Activated CD8-positive, alpha-beta T cell treated with anti-CD3 and anti-CD28 coated beads for 36 hours (primary cell): ENCODE measurements at regions of chr14 and their contacts with region 1.

Region 1: GRCh38 chr14:90288651-90289355 is 32.5 kb downstream of the PSMC1 start:
- DNase-seq: no peak
- ATAC-seq: no peak
- H3K4me3 Mint-ChIP-seq: no peak overlapping the region
- H3K27ac Mint-ChIP-seq: no peak overlapping the region
- H3K4me1 Mint-ChIP-seq: no peaks in the 10 kb centered on the region
- H3K27me3 Mint-ChIP-seq: no peaks in the 10 kb centered on the region
- CTCF ChIP-seq: no peak

Region 2: DNA sequence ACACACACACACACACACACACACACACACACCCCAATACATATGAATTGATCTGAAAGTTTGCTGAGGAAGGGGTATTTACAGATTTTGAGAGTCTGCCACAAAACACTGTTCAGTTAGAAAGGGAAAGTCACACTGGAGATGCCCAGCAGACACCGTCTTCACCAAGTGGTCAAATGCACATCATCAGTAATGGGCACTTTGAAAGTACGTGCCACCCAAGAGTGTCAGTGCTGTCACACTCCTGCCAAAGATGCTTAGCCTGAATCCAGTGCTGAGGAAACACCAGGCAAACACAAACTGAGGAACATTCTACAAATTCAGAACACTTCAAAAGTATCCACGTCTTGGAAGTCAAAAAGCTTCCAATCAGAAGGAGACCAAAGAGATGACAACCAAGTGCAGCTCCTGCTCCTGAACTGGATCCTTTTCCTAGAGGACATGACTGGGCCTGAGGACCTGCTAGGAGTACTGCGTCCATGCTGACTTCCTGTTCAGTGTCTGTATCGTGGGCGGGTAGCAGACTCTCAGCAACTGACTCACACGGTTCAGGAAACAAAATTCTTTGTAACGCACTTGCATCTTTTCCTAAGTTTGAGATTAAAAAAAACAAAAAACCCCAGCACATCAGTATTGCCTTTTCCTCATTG is 13.9 kb before region 1 on chr14:
- CTCF ChIA-PET with region 1: interaction called, 3 read pairs
- POLR2A ChIA-PET with region 1: interaction called, 10 read pairs
- intact Hi-C with region 1: no loop called
- DNase-seq: peak; percentile 45
- ATAC-seq: peak; percentile 75
- H3K4me3 Mint-ChIP-seq: no peak overlapping the region
- H3K27ac Mint-ChIP-seq: peak overlapping the region; percentile 87
- H3K4me1 Mint-ChIP-seq: peaks cover 13% of the 10 kb centered on the region
- H3K27me3 Mint-ChIP-seq: no peaks in the 10 kb centered on the region
- CTCF ChIP-seq: no peak